ENCODE measurements at regions of chr2 and their contacts with region 1.

Region 1: GRCh38 chr2:95345566-95346230 is 48.6 kb downstream of the KCNIP3 start:
- DNase-seq: no peak
- H3K4me3 ChIP-seq: peak overlapping the region; percentile 63
- CTCF ChIP-seq: peak; percentile 96

Region 2: DNA sequence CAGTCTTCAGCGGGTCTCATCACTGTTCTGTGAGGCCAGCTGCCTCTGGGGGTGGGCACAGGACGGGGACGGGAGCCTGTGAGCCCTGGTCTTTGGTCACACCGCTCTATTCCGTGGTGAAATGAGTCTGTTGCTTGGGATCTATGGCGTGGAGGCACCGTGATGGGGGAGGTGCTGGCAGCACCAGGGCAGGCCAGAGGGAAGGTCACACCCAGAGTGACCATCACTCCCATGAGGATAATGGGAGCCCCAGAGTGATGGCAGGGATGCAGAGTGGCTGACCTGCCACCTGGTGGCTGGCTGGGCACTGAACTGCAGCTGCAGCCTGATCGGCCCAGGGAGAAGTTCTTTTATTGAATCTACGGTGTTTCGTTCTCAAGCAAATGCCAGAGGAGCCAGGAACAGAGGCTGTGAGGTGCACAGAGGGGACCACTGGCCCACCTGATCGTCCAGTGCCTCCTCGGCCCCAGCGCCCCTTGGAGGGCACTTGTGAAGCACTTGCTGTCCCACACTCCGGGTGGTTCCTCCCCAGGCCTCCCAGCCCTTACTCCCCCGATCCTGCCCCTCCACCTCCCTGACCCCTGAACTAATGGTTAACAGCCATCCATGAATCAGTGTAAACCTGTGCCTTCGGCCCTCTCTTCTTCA is 30.6 kb before region 1 on chr2:
- CTCF ChIA-PET with region 1: interaction called, 19 read pairs
- POLR2A ChIA-PET with region 1: no interaction called
- DNase-seq: no peak
- H3K4me3 ChIP-seq: no peak overlapping the region
- CTCF ChIP-seq: peak; percentile 66

Region 3: GRCh38 chr2:95333888-95334338 is 11.8 kb before region 1 on chr2:
- CTCF ChIA-PET with region 1: interaction called, 20 read pairs
- POLR2A ChIA-PET with region 1: no interaction called
- DNase-seq: no peak
- H3K4me3 ChIP-seq: no peak overlapping the region
- CTCF ChIP-seq: no peak

Region 4: DNA sequence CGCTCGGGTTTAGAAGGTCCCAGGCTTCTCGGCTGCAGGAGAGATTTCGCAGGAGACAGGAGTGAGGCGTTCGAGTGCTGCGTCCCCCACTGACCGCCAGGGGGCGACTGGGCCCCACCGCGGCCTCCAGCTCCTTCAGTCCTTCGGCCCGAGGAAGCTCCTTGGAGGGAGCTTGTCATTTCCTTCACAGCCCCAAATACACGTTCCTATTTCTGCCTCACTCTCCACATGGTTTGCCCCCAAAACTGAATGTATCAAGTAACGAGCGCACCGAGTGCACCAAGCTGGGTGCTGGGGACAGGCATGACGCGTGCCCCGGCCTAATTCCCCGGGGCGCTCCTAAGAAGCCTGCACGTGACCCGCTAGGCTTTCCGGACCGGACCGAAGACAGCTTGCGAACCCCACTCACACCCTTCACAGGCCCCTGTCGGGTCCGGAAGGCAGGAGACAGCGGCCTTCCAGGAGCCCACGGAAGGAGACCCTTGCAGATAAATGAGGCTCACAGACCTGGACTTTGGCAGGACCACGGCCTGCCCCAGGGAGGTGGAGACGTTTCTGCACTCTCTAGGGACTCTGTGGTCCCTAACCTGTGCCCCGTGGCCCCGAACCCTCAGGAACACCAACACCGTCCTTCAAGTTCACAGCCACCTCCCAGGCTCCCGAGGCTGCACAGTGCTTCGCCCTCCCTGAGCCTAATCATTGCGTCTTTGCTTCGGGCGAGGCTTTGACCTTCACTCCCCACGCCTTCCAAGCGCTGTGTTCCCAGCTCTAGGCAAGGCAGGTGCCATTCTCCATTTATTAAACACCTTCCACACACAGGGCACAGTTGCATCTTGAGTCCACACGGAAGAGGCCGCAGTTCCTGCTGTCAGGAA is 43.8 kb after region 1 on chr2:
- CTCF ChIA-PET with region 1: interaction called, 17 read pairs
- POLR2A ChIA-PET with region 1: no interaction called
- DNase-seq: no peak
- H3K4me3 ChIP-seq: no peak overlapping the region
- CTCF ChIP-seq: peak; percentile 97

Region 5: DNA sequence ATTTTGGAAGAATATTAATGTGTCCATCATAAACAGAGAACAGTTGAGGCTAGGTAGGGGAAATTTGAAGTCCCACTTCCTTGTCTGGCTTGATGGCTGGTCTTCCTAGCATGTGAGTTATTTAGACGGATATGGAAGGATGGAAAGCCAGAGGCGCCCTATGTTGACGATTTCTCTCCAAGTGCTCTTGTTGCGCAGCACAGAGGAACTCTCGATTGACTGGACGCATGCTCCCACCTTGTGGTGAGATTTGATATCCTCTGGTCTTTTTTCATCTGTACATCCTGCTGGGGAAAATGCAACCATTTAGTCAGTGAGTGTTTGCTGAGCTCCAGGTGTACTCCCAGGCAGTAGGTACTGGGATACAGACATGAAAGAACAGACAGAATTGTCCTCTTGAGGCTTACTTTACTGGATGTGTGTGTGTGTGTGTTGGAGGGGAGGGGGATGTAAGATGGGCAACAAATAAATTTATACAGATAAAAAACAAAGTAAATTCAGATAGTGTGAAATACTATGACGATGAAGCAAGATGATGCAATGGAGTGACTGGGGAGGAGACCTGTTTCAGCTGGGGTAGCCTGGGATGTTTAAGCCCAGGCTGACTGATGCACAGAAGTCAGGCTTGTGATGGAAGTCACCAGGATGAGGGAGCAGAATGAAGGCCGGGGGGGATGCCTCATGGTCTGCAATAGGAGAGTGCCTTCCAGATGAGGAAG is 383.3 kb after region 1 on chr2:
- CTCF ChIA-PET with region 1: interaction called, 18 read pairs
- POLR2A ChIA-PET with region 1: no interaction called
- DNase-seq: peak; percentile 59
- H3K4me3 ChIP-seq: no peak overlapping the region
- CTCF ChIP-seq: peak; percentile 60

Measured in AG04449 (cell line).